ENCODE measurements at regions of chr2 and their contacts with region 1.

Region 1: DNA sequence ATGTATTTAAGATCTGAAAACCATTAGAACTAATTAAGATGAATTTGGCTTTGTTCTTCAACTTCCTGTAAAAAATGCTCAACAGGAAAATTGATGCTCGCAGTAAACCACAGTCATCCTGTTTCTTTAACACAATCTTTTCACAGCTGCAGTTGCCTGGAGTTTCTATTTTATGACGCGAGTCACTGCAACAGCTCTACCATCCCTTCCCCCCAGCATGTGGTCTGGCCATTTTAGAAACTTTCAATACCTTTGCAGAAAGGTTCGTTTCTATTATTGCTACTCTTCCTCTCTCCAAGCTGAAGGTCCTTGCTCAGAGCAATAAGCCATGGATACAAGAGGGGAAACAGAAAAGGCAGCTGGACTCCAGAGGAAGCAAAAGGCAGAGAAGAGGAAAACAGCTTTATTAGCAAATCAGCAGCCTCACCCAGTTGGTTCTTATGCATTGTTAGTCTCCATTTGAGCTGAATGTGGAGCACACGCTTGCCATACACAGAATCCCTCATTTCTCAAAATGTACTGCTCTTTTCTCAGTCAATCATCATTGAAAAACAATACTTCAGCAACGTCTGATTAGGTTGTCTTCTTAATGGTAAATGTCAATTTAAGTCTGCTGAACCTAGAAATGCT is 3.9 kb downstream of the WIPF1 start:
- DNase-seq: peak; percentile 40 to 95 (median 58)
- ATAC-seq: peak; percentile 78
- H3K4me3 ChIP-seq: peak overlapping the region; percentile 69
- H3K4me3 Mint-ChIP-seq: peak overlapping the region; percentile 98
- H3K27ac ChIP-seq: peak overlapping the region; percentile 75 to 91
- H3K27ac Mint-ChIP-seq: peak overlapping the region; percentile 95
- H3K4me1 ChIP-seq: peaks cover 47% of the 10 kb centered on the region
- H3K4me1 Mint-ChIP-seq: peaks cover 61% of the 10 kb centered on the region
- H3K27me3 ChIP-seq: no peaks in the 10 kb centered on the region
- H3K27me3 Mint-ChIP-seq: no peaks in the 10 kb centered on the region
- CTCF ChIP-seq: no peak

Region 2: GRCh38 chr2:174383796-174384195 is 209.9 kb before region 1 on chr2:
- CTCF ChIA-PET with region 1: no interaction called
- POLR2A ChIA-PET with region 1: no interaction called
- intact Hi-C with region 1: no loop called
- DNase-seq: no peak
- ATAC-seq: no peak
- H3K4me3 ChIP-seq: no peak overlapping the region
- H3K4me3 Mint-ChIP-seq: no peak overlapping the region
- H3K27ac ChIP-seq: no peak overlapping the region
- H3K27ac Mint-ChIP-seq: no peak overlapping the region
- H3K4me1 ChIP-seq: no peaks in the 10 kb centered on the region
- H3K4me1 Mint-ChIP-seq: peaks cover 19% of the 10 kb centered on the region
- H3K27me3 ChIP-seq: no peaks in the 10 kb centered on the region
- H3K27me3 Mint-ChIP-seq: no peaks in the 10 kb centered on the region
- CTCF ChIP-seq: no peak

Region 3: GRCh38 chr2:174487108-174487819 is 106.4 kb before region 1 on chr2:
- CTCF ChIA-PET with region 1: no interaction called
- POLR2A ChIA-PET with region 1: interaction called, 80 read pairs
- intact Hi-C with region 1: loop called in 1 of 2 experiments (anchors 5 kb)
- DNase-seq: peak; percentile 80 to 100 (median 98)
- ATAC-seq: peak; percentile 78
- H3K4me3 ChIP-seq: peak overlapping the region; percentile 83
- H3K4me3 Mint-ChIP-seq: peak overlapping the region; percentile 94
- H3K27ac ChIP-seq: peak overlapping the region; percentile 49 to 75
- H3K27ac Mint-ChIP-seq: peak overlapping the region; percentile 95
- H3K4me1 ChIP-seq: peaks cover 33% of the 10 kb centered on the region
- H3K4me1 Mint-ChIP-seq: peaks cover 82% of the 10 kb centered on the region
- H3K27me3 ChIP-seq: no peaks in the 10 kb centered on the region
- H3K27me3 Mint-ChIP-seq: no peaks in the 10 kb centered on the region
- CTCF ChIP-seq: no peak

Region 4: GRCh38 chr2:174554529-174555150 is 39.0 kb before region 1 on chr2:
- CTCF ChIA-PET with region 1: no interaction called
- POLR2A ChIA-PET with region 1: interaction called, 10 read pairs
- intact Hi-C with region 1: no loop called
- DNase-seq: peak in 3 of 14 experiments; percentile 45 to 69 (median 68)
- ATAC-seq: peak; percentile 66
- H3K4me3 ChIP-seq: no peak overlapping the region
- H3K4me3 Mint-ChIP-seq: no peak overlapping the region
- H3K27ac ChIP-seq: peak overlapping the region; percentile 32 to 59
- H3K27ac Mint-ChIP-seq: peak overlapping the region; percentile 76
- H3K4me1 ChIP-seq: peaks cover 36% of the 10 kb centered on the region
- H3K4me1 Mint-ChIP-seq: peaks cover 43% of the 10 kb centered on the region
- H3K27me3 ChIP-seq: no peaks in the 10 kb centered on the region
- H3K27me3 Mint-ChIP-seq: no peaks in the 10 kb centered on the region
- CTCF ChIP-seq: no peak

Region 5: DNA sequence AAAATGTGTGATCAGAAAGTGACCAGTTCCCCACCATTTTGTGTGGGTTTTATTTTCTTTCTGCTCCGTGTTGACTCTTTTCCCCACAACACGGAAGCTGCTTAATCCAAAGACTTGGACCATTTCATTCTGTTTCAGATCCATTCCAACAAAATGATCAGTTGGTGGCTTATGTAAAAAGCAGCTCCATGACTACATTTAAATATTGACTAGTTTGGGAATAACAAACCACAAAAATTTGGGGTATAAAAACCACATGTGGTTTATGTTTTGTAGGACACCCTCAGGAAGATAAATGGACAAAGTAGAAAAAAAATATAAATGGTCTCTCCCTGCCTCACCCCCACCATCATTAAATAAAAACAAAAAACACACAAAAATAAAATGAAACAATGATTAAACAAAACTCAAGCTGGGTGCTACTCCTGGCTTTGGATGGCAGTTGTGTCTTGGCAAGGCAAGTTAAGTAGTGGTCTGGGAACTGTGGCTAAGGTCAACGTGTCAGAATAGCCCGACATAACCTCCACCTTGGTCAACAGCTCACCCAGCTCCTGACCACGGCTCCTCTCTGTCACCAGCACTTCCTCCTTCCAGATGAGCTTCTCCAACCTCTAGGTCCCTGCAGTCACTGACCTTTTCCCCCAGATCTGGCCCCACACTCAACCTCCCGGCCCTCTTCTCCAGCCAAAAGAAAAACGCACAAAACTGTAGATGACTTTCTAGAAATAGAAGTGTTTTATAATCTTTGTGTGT is 16.7 kb after region 1 on chr2:
- CTCF ChIA-PET with region 1: interaction called, 4 read pairs
- POLR2A ChIA-PET with region 1: interaction called, 106 read pairs
- intact Hi-C with region 1: loop called in 1 of 2 experiments (anchors 2 kb)
- DNase-seq: no peak
- ATAC-seq: no peak
- H3K4me3 ChIP-seq: no peak overlapping the region
- H3K4me3 Mint-ChIP-seq: peak overlapping the region; percentile 34
- H3K27ac ChIP-seq: peak overlapping the region; percentile 58 to 74
- H3K27ac Mint-ChIP-seq: peak overlapping the region; percentile 86
- H3K4me1 ChIP-seq: peaks cover 56% of the 10 kb centered on the region
- H3K4me1 Mint-ChIP-seq: peaks cover 97% of the 10 kb centered on the region
- H3K27me3 ChIP-seq: no peaks in the 10 kb centered on the region
- H3K27me3 Mint-ChIP-seq: no peaks in the 10 kb centered on the region
- CTCF ChIP-seq: no peak

Region 6: GRCh38 chr2:174682578-174683391 is 89.1 kb after region 1 on chr2:
- CTCF ChIA-PET with region 1: interaction called, 4 read pairs
- POLR2A ChIA-PET with region 1: interaction called, 18 read pairs
- intact Hi-C with region 1: no loop called
- DNase-seq: peak; percentile 32 to 81 (median 56)
- ATAC-seq: peak; percentile 74
- H3K4me3 ChIP-seq: peak overlapping the region; percentile 75
- H3K4me3 Mint-ChIP-seq: peak overlapping the region; percentile 98
- H3K27ac ChIP-seq: peak overlapping the region in 1 of 2 donors; percentile 41
- H3K27ac Mint-ChIP-seq: peak overlapping the region; percentile 91
- H3K4me1 ChIP-seq: peaks cover 38% of the 10 kb centered on the region
- H3K4me1 Mint-ChIP-seq: peaks cover 43% of the 10 kb centered on the region
- H3K27me3 ChIP-seq: no peaks in the 10 kb centered on the region
- H3K27me3 Mint-ChIP-seq: no peaks in the 10 kb centered on the region
- CTCF ChIP-seq: no peak

Region 7: GRCh38 chr2:174787487-174788205 is 194.0 kb after region 1 on chr2:
- CTCF ChIA-PET with region 1: no interaction called
- POLR2A ChIA-PET with region 1: no interaction called
- intact Hi-C with region 1: no loop called
- DNase-seq: no peak
- ATAC-seq: no peak
- H3K4me3 ChIP-seq: no peak overlapping the region
- H3K4me3 Mint-ChIP-seq: no peak overlapping the region
- H3K27ac ChIP-seq: no peak overlapping the region
- H3K27ac Mint-ChIP-seq: peak overlapping the region; percentile 28
- H3K4me1 ChIP-seq: peaks cover 14% of the 10 kb centered on the region
- H3K4me1 Mint-ChIP-seq: peaks cover 9% of the 10 kb centered on the region
- H3K27me3 ChIP-seq: no peaks in the 10 kb centered on the region
- H3K27me3 Mint-ChIP-seq: no peaks in the 10 kb centered on the region
- CTCF ChIP-seq: no peak

Measured in CD4-positive, alpha-beta T cell (primary cell).